Lower leg skin (tissue), 4 donors: ENCODE measurements at regions of chr1 and their contacts with region 1.

Region 1: DNA sequence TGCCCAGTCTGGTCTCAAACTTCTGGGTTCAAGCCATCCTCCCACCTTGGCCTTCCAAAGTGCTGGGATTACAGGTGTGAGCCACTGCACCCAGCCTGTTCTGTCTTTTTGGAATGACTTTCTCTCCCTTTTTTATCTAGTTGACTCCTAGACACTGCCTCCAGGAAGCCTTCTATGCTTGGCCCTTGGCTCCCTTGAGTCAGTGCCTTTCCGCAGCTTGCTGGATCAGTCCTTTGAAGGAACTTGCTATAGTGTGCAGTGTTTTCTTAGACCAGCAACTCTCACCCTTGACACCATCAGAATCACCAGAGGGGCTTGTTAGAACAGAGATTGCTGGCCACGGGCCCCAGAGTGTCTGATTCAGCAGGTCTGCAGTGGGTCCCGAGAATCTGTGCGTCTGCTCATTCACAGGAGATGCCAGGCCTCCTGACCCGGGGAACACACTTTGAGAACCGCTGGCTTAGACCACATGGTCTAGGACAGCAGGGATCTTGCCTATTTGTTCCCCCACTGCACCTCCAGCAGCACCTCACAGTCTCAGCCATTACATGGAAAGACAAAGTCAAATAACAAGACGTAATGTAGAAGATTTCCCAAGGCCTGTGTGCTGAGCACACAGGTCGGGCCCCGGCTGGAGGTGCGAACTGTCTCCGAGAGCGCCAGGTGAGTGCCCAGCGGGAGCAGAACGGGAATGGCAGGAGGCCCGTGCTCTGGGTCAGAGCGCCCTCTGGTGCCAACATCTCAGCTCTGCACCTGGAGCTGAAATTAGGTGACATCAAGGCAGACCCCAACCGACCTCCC is 27.4 kb upstream of the CTPS1 start:
- DNase-seq: peak; percentile 52 to 94
- H3K4me3 ChIP-seq: no peak overlapping the region
- CTCF ChIP-seq: peak in 1 of 3 donors; percentile 62
- POLR2A ChIP-seq: no peak

Region 2: GRCh38 chr1:40763742-40764532 is 188.2 kb before region 1 on chr1:
- intact Hi-C with region 1: no loop called
- DNase-seq: no peak
- H3K4me3 ChIP-seq: no peak overlapping the region
- CTCF ChIP-seq: no peak
- POLR2A ChIP-seq: no peak

Region 3: DNA sequence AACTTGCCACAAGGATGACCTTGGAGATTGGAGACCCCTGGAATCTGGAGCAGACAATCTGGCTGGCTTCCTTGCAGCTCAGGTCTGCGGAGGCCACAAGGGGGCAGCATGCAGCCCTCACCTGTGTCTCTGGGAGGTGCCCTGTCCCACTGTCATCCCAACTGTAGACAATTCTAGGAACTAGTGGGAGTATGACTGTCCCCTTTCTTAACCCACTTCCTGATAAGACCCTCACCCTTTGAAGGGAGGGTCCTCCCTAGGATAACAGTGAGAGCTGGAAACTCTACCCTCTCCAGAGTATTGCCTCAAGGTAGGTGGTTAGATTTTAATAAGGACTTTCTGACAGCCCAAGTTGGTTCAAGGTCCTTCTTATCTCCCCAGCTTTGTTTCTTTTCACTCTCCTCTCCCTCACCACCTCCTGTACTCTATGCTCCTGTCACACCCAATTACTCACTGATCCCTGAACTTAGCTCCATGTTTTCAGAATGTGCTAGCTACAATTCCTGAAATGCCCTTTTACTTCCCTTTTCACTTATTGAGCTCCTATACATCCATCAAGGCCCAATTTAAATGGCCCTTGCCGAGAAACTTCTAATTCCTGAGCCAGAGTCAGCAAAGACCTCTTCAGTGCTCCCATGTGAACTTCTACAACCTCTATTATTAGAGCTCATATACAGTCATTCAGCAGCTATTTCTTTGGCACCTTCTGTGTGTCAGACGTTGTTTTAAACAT is 177.7 kb before region 1 on chr1:
- intact Hi-C with region 1: loop called (anchors 1 kb)
- DNase-seq: peak in 1 of 2 donors; percentile 89
- H3K4me3 ChIP-seq: no peak overlapping the region
- CTCF ChIP-seq: no peak
- POLR2A ChIP-seq: no peak

Region 4: DNA sequence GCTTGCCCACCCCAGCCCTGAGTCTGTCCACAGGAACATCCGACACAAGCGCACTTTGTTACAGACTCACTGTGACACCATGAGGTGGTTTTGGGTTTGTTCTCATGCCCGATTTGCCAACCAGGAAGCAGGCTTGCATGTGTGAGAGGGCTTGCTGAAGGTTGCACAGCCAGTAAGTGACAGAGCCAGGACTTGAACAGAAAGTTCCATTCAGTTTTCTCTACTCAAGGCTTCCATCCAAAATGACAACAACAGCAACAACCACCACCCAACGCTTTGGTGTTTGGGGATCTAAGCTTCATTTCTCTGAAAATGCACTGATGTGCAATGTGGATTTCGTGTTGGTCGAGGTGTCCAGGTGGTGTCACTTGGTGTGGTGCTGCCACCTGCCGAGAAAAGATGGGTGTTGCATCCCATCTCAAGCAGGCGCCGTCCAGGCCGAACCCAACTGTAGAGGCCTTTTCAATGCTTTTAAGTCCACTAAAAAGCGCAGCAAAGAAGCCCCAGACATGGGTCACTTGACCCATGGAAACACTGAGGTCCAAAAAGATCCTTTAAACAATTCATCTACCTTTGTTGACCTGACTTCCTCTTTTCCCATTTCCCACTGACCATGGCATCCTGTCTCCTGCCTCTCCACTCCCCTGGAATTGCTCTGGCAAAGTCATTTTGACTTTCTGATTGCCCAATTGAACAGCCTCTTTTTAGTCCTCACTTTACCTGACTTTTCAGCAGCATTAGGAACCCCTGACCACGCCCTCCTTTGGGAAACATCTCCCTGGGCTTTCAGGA is 102.1 kb before region 1 on chr1:
- intact Hi-C with region 1: loop called (anchors 2 kb)
- DNase-seq: peak; percentile 44 to 93
- H3K4me3 ChIP-seq: no peak overlapping the region
- CTCF ChIP-seq: no peak
- POLR2A ChIP-seq: no peak

Region 5: DNA sequence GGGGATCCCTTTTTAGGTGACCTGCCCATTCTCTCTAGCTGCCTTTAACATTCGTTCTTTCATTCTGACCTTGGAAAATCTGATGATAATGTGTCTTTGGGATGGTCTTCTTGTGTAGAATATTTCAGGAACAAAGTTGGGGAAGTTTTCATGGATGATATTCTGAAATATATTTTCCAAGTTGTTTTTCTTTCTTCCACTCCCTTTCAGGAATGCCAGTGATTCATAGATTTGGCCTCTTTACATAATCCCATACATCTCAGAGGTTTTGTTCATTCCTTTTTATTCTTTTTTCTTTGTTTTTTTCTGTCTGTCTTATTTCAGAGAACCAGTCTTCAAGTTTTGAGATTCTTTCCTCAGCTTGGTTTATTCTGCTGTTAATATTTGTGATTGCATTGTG is 303.8 kb after region 1 on chr1:
- intact Hi-C with region 1: no loop called
- DNase-seq: no peak
- H3K4me3 ChIP-seq: no peak overlapping the region
- CTCF ChIP-seq: no peak
- POLR2A ChIP-seq: no peak